Activated CD4-positive, alpha-beta T cell treated with anti-CD3 and anti-CD28 coated beads for 36 hours (primary cell): ENCODE measurements at regions of chr2 and their contacts with region 1.

Region 1: GRCh38 chr2:230798769-230799399 is 65.9 kb upstream of the ITM2C start:
- DNase-seq: peak; percentile 63
- ATAC-seq: no peak
- H3K4me3 Mint-ChIP-seq: no peak overlapping the region
- H3K27ac Mint-ChIP-seq: peak overlapping the region; percentile 82
- H3K4me1 Mint-ChIP-seq: peaks cover 18% of the 10 kb centered on the region
- H3K27me3 Mint-ChIP-seq: no peaks in the 10 kb centered on the region

Region 2: GRCh38 chr2:230326453-230327417 is 472.1 kb before region 1 on chr2 and contains the start of gene SP140L:
- CTCF ChIA-PET with region 1: no interaction called
- POLR2A ChIA-PET with region 1: no interaction called
- intact Hi-C with region 1: loop called in 1 of 2 experiments (anchors 5 kb)
- DNase-seq: peak; percentile 89
- ATAC-seq: peak; percentile 97
- H3K4me3 Mint-ChIP-seq: peak within 1 kb of the TSS; percentile 89
- H3K27ac Mint-ChIP-seq: peak within 1 kb of the TSS; percentile 98
- H3K4me1 Mint-ChIP-seq: peaks cover 61% of the 10 kb centered on the region
- H3K27me3 Mint-ChIP-seq: no peaks in the 10 kb centered on the region
- total RNA-seq, gene SP140L: 40.1 to 43.4 TPM

Region 3: DNA sequence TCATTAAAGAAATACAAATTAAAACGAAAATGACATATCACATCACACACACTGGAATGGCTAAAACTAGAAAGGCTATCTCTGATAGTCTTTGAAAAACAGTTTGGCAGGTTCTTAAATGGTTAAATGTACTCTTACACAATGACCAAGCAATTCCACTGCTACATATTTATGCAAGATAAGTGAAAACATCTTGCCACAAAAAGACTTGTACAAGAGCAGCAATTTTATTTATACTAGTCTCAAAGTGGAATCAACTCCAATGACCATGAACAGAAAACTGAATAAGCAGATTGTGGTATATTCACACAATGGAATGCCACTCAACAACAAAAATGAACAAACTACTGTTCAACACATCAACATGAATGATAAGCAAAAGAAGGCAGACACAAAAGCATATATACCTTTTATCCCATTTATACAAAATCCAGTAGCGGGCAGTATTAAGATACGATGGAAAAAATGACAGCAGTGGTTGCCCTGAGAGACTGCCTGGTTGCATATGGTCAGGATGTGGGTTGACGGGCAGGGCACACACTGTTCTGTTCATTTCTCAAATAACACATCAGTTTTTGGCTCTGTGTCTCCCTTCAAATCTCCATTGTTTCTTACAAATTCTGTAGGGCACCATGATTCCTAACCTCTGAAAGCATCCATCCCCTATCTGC is 357.5 kb before region 1 on chr2:
- CTCF ChIA-PET with region 1: no interaction called
- POLR2A ChIA-PET with region 1: no interaction called
- intact Hi-C with region 1: loop called in 1 of 2 experiments (anchors 10 kb)
- DNase-seq: peak; percentile 59
- ATAC-seq: peak; percentile 80
- H3K4me3 Mint-ChIP-seq: peak overlapping the region; percentile 40
- H3K27ac Mint-ChIP-seq: peak overlapping the region; percentile 84
- H3K4me1 Mint-ChIP-seq: peaks cover 60% of the 10 kb centered on the region
- H3K27me3 Mint-ChIP-seq: no peaks in the 10 kb centered on the region

Region 4: GRCh38 chr2:230721712-230722111 is 77.2 kb before region 1 on chr2:
- CTCF ChIA-PET with region 1: interaction called, 6 read pairs
- POLR2A ChIA-PET with region 1: no interaction called
- intact Hi-C with region 1: loop called in 1 of 2 experiments (anchors 2 kb)
- DNase-seq: no peak
- ATAC-seq: no peak
- H3K4me3 Mint-ChIP-seq: peak overlapping the region; percentile 1
- H3K27ac Mint-ChIP-seq: peak overlapping the region; percentile 82
- H3K4me1 Mint-ChIP-seq: peaks cover 86% of the 10 kb centered on the region
- H3K27me3 Mint-ChIP-seq: no peaks in the 10 kb centered on the region

Region 5: DNA sequence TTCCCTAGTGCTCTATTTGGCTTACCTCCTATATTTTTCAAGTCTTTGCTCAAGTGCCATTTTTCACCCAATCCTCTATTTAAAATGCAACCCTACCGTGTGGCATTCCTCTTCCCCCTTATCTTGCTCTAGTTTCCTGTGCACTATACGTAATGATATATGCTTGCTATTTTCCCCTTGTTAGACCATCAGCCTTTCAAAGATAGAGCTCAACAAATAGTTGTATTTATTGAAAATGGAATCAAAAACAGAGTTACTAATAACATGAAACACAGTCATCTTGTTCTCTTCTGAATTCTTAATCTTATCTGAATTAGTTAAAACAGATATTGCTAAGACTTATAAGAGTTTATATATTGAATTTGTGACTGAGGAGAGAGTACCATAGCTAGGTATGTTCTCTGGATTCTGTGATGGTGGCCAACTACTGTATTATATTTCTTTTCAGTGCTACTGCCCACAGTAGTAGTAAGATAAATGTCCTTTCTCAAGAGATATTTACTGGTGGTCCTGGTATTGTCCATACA is 31.0 kb before region 1 on chr2:
- CTCF ChIA-PET with region 1: interaction called, 12 read pairs
- POLR2A ChIA-PET with region 1: interaction called, 6 read pairs
- intact Hi-C with region 1: loop called in 1 of 2 experiments (anchors 2 kb)
- DNase-seq: no peak
- ATAC-seq: peak; percentile 50
- H3K4me3 Mint-ChIP-seq: no peak overlapping the region
- H3K27ac Mint-ChIP-seq: peak overlapping the region; percentile 61
- H3K4me1 Mint-ChIP-seq: peaks cover 82% of the 10 kb centered on the region
- H3K27me3 Mint-ChIP-seq: no peaks in the 10 kb centered on the region

Region 6: GRCh38 chr2:230814616-230815015 is 15.7 kb after region 1 on chr2:
- CTCF ChIA-PET with region 1: interaction called, 15 read pairs
- POLR2A ChIA-PET with region 1: no interaction called
- intact Hi-C with region 1: no loop called
- DNase-seq: no peak
- ATAC-seq: peak; percentile 42
- H3K4me3 Mint-ChIP-seq: no peak overlapping the region
- H3K27ac Mint-ChIP-seq: peak overlapping the region; percentile 58
- H3K4me1 Mint-ChIP-seq: peaks cover 4% of the 10 kb centered on the region
- H3K27me3 Mint-ChIP-seq: no peaks in the 10 kb centered on the region

Region 7: GRCh38 chr2:230893841-230894781 is 95.2 kb after region 1 on chr2:
- CTCF ChIA-PET with region 1: no interaction called
- POLR2A ChIA-PET with region 1: no interaction called
- intact Hi-C with region 1: no loop called
- DNase-seq: no peak
- ATAC-seq: peak; percentile 68
- H3K4me3 Mint-ChIP-seq: no peak overlapping the region
- H3K27ac Mint-ChIP-seq: no peak overlapping the region
- H3K4me1 Mint-ChIP-seq: peaks cover 16% of the 10 kb centered on the region
- H3K27me3 Mint-ChIP-seq: peaks cover 10% of the 10 kb centered on the region